WTC11 (cell line): ENCODE measurements at regions of chr1 and their contacts with region 1.

Region 1: DNA sequence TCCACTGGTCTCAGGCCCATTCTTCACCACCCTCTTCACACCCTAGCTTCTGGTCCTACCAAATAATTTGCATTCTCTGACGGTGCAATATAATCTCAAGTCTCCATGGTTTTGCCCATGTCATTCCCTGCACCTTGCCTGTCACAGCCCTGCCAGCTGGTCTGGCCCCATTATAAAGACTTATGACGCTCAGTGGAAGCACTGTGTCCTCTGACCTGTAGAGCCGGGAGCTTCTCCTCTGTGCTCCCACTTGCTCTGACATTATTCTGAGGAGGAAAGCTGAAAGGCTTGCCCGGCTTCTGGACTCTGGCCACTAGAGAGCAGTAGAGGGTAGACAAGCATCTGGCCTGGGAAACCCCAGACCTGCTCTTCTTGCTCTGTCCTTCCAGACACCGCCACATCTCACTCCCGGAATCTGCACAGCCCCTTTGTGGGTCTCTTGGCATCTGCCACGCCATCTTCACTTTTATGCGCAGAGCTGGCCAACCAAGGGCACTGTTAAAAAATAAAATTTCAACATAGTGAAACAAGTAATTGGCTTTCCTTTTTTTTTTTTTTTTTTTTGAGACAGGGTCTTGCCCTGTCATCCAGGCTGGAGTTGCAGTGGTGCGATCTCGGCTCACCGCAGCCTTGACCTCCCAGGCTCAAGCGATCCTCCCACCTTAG is 44.4 kb downstream of the NENF start:
- DNase-seq: peak; percentile 88
- ATAC-seq: peak; percentile 96
- H3K4me3 Mint-ChIP-seq: no peak overlapping the region
- H3K27ac Mint-ChIP-seq: no peak overlapping the region
- H3K4me1 Mint-ChIP-seq: peaks cover 16% of the 10 kb centered on the region
- H3K27me3 Mint-ChIP-seq: no peaks in the 10 kb centered on the region
- CTCF ChIP-seq: peak; percentile 70

Region 2: GRCh38 chr1:212359794-212360479 is 117.2 kb before region 1 on chr1:
- CTCF ChIA-PET with region 1: no interaction called
- POLR2A ChIA-PET with region 1: no interaction called
- DNase-seq: no peak
- ATAC-seq: no peak
- H3K4me3 Mint-ChIP-seq: no peak overlapping the region
- H3K27ac Mint-ChIP-seq: peak overlapping the region; percentile 6; the same call in 1 of the 2 replicates
- H3K4me1 Mint-ChIP-seq: no peaks in the 10 kb centered on the region
- H3K27me3 Mint-ChIP-seq: no peaks in the 10 kb centered on the region
- CTCF ChIP-seq: no peak

Region 3: DNA sequence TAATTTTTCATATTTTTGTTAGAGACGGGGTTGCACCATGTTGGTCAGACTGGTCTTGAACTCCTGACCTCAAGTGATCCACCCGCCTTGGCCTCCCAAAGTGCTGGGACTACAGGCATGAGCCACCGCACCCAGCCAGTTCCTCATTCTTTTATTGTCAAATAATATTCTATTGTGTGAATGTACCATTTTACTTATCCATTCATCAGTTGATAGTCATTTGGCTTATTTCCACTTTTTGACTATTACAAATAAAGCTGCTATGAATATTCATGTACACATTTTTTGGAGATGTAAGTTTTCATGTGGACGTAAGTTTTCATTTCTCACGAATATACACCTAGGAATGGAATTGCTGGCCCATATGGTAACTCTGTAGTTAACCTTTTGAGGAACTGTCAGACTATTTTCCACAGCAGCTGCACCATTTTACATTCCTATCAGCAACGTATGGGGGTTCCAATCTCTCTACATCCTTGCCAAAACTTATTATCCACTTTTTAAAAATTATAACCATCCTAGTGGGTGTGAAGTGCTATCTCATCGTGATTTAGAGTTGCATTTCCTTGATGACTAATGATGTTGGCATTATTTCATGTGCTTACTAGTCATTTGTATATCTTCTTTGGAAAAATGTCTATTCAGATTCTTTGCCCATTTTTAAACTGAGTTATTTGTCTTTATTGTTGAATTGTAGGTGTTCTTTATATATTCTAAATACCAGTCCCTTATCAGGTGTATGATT is 75.1 kb before region 1 on chr1:
- CTCF ChIA-PET with region 1: no interaction called
- POLR2A ChIA-PET with region 1: no interaction called
- DNase-seq: no peak
- ATAC-seq: no peak
- H3K4me3 Mint-ChIP-seq: no peak overlapping the region
- H3K27ac Mint-ChIP-seq: no peak overlapping the region
- H3K4me1 Mint-ChIP-seq: no peaks in the 10 kb centered on the region
- H3K27me3 Mint-ChIP-seq: no peaks in the 10 kb centered on the region; the same call in 1 of the 2 replicates
- CTCF ChIP-seq: no peak

Region 4: DNA sequence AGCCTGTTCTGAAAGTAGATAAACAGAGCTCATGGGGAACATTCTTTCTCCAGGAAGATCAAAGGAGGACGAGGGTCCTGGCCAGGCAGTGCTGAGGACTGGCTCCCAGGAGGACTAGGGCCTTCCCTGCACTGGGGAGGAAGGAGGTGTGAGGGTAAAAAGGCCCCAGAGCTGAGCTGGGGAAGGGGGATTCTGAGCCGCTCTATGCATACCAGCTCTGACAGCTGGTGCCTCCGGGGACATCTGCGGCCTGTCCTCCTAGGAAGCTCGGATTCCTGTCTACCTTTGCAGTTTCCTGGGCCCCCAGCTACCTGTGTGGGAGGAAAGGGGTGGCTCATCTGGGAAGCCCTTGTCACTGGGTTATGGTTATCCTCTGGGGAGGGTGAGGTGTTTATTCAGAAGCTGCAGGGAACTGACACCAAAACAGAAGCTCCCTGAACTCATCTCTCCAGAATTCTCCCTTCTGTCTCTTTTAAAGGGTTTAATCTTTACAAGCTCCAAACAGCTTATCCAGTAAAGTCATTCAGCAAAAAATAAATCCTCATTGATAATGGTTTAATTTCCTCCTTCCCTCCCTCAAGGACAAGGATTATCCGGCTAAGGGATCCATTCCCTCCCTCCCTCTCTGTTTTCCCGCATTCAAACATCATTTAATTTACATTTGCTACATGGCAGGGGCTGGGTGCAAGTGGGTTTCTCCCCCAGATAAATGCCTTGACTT is 13.4 kb before region 1 on chr1:
- CTCF ChIA-PET with region 1: interaction called, 55 read pairs
- POLR2A ChIA-PET with region 1: no interaction called
- DNase-seq: no peak
- ATAC-seq: no peak; the same call in 1 of the 2 replicates
- H3K4me3 Mint-ChIP-seq: no peak overlapping the region
- H3K27ac Mint-ChIP-seq: no peak overlapping the region
- H3K4me1 Mint-ChIP-seq: peaks cover 41% of the 10 kb centered on the region
- H3K27me3 Mint-ChIP-seq: no peaks in the 10 kb centered on the region; the same call in none of the 2 replicates
- CTCF ChIP-seq: no peak

Region 5: DNA sequence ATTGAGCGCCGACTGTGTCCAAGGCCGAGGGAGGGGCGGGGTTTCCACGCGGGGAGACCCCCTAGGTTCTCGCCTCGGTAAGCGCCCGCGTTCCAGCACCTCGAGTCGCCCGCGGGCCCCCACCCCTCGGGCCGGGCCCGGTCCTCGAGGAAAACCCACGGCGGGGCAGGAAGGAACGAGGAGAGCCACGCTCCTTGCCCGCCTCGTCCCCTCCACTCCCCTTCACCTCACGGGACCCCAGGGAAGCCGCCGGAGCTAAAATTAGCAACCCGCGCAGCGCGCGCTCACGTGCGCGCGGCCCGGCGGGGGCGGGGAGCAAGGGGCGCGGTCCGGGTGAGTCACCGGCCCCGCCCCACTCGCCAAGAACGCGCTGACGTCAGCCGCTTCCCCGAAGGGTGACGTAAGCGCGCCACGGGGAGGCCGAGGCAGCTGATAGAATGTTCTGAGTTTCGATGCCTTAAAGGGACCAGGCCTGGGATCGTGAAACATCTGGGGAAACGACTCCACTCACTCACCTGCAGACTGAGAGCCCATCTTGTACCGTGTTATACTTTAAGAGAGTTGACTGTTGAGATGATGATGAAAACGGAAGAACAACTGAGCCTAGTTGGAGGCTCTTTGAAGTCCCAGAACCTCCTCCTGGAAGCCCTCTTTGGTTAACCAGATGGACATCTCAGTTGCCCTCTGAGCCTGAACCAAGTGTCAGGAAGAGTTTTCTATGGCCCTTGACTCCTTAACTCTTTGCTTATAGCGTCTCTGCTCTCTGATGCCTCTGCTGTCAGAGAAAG is 81.7 kb after region 1 on chr1:
- CTCF ChIA-PET with region 1: interaction called, 16 read pairs
- POLR2A ChIA-PET with region 1: interaction called, 5 read pairs
- DNase-seq: peak; percentile 92
- ATAC-seq: peak; percentile 76
- H3K4me3 Mint-ChIP-seq: peak overlapping the region; percentile 70
- H3K27ac Mint-ChIP-seq: peak overlapping the region; percentile 98
- H3K4me1 Mint-ChIP-seq: peaks cover 12% of the 10 kb centered on the region
- H3K27me3 Mint-ChIP-seq: peaks cover 28% of the 10 kb centered on the region
- CTCF ChIP-seq: no peak

Region 6: GRCh38 chr1:212595787-212596714 is 118.9 kb after region 1 on chr1:
- CTCF ChIA-PET with region 1: interaction called, 15 read pairs
- POLR2A ChIA-PET with region 1: no interaction called
- DNase-seq: peak; percentile 39
- ATAC-seq: peak; percentile 76
- H3K4me3 Mint-ChIP-seq: no peak overlapping the region
- H3K27ac Mint-ChIP-seq: peak overlapping the region; percentile 54; the same call in 1 of the 2 replicates
- H3K4me1 Mint-ChIP-seq: peaks cover 21% of the 10 kb centered on the region
- H3K27me3 Mint-ChIP-seq: peaks cover 14% of the 10 kb centered on the region
- CTCF ChIP-seq: peak; percentile 47

Region 7: DNA sequence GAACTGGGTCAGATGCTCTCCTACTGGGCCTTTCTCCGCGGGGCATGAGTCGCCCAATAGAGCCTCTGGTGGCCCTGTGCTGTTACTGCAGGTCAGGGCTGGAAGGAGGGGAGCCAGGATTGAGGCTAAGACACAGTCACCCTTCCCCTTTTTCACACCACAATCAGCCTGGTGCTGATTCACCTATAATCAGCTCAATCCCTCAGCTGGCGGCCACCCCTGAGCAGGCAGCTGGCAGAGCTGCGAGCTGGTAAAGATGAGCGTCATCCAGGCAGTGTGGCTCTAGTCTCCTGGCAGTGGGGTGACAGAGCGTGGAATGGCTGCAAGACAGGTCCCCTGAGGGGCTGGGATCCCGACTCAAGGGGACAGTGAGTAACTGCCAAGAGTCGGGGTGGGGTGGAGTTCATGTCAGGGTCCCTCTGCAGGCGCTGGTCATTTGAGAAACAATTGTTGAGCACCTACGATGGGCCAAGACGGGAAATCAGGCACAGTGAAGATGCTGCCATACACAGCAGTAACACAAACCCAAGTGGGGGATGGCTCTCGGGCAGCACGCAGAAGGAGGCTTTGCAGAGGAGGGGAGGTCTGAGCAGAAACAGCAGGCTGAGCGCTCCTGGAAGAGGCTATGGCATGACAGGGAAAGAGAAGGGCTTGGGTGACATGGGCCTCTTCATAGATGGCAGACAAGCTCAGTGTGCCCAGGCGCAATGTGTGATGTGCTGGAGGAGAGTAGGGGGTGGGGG is 153.2 kb after region 1 on chr1:
- CTCF ChIA-PET with region 1: interaction called, 11 read pairs
- POLR2A ChIA-PET with region 1: no interaction called
- DNase-seq: peak; percentile 73
- ATAC-seq: peak; percentile 99
- H3K4me3 Mint-ChIP-seq: no peak overlapping the region
- H3K27ac Mint-ChIP-seq: no peak overlapping the region
- H3K4me1 Mint-ChIP-seq: no peaks in the 10 kb centered on the region
- H3K27me3 Mint-ChIP-seq: peaks cover 4% of the 10 kb centered on the region
- CTCF ChIP-seq: peak; percentile 87